Naive thymus-derived CD4-positive, alpha-beta T cell (primary cell): ENCODE measurements at regions of chr1 and their contacts with region 1.

Region 1: DNA sequence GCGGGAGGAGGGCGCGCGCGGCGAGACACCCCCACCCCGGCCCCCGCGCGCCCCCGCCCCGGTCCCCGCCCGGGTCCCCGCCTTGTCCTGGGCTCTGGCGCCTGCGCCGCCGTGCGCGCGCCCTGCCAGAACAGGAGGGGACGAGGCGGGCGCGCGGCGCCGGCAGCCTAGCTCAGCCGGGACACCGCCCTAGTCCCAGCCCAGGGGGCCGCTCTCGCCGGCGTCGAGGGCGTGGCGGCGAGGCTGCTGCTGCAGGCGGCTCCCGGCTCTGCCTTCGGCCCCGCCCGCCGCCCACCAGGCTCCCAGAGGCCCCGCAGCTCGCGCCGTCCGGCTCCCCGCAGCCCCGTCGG is at the start of gene RCAN3:
- DNase-seq: peak; percentile 82 to 94 (median 92)
- ATAC-seq: peak; percentile 81
- H3K4me3 ChIP-seq: peak within 1 kb of the TSS; percentile 84
- H3K4me3 Mint-ChIP-seq: peak within 1 kb of the TSS; percentile 90 to 100 (median 99)
- H3K27ac ChIP-seq: peak within 1 kb of the TSS; percentile 99
- H3K27ac Mint-ChIP-seq: peak within 1 kb of the TSS; percentile 95 to 99 (median 98)
- H3K4me1 ChIP-seq: peaks cover 42 to 53% of the 10 kb centered on the region in 2 donors
- H3K4me1 Mint-ChIP-seq: peaks cover 38 to 65% (median 60%) of the 10 kb centered on the region in 7 donors
- H3K27me3 ChIP-seq: no peaks in the 10 kb centered on the region
- H3K27me3 Mint-ChIP-seq: peaks cover 0 to 9% (median 0%) of the 10 kb centered on the region in 5 donors
- total RNA-seq, gene RCAN3: 68.5 to 247 (median 183) TPM

Region 2: DNA sequence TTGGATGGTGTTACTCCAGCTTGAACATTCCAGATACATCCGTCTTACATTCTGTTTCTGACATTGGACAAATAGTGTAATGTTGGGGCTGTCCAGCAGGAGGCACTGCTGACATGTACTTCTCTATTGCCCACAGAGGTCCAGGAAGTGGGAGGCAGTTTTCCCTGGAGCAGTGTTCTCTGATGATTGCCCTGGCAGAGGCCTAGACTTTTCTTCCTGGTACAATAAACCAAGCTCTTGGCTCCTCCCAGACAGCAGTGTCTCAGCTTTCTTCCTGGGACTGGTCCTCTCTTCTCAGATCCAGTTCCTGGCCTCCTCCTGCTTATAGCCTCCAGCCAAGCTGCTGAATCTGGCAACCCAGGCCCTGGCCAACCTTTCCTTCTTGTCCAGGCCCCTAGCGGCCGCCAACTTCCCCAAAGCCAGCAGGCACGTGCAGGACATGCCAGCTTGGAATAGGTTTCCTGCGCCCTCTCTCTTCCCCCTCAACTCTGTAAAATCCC is 300.7 kb before region 1 on chr1:
- CTCF ChIA-PET with region 1: no interaction called
- POLR2A ChIA-PET with region 1: no interaction called
- intact Hi-C with region 1: loop called in 1 of 2 experiments (anchors 10 kb)
- DNase-seq: peak in 7 of 9 donors; percentile 29 to 54 (median 42)
- ATAC-seq: peak; percentile 53
- H3K4me3 ChIP-seq: no peak overlapping the region
- H3K4me3 Mint-ChIP-seq: no peak overlapping the region
- H3K27ac ChIP-seq: no peak overlapping the region
- H3K27ac Mint-ChIP-seq: no peak overlapping the region
- H3K4me1 ChIP-seq: peaks cover 0 to 4% of the 10 kb centered on the region in 2 donors
- H3K4me1 Mint-ChIP-seq: peaks cover 0 to 16% (median 5%) of the 10 kb centered on the region in 7 donors
- H3K27me3 ChIP-seq: no peaks in the 10 kb centered on the region
- H3K27me3 Mint-ChIP-seq: peaks cover 0 to 5% (median 0%) of the 10 kb centered on the region in 5 donors

Region 3: GRCh38 chr1:24481101-24481500 is 21.6 kb before region 1 on chr1:
- CTCF ChIA-PET with region 1: interaction called, 44 read pairs
- POLR2A ChIA-PET with region 1: interaction called, 929 read pairs
- intact Hi-C with region 1: loop called (anchors 1 kb)
- DNase-seq: peak in 8 of 9 donors; percentile 50 to 80 (median 75)
- ATAC-seq: peak; percentile 84
- H3K4me3 ChIP-seq: peak overlapping the region; percentile 44
- H3K4me3 Mint-ChIP-seq: peak overlapping the region; percentile 74 to 95 (median 83)
- H3K27ac ChIP-seq: peak overlapping the region; percentile 83
- H3K27ac Mint-ChIP-seq: peak overlapping the region; percentile 93 to 99 (median 98)
- H3K4me1 ChIP-seq: peaks cover 49 to 59% of the 10 kb centered on the region in 2 donors
- H3K4me1 Mint-ChIP-seq: peaks cover 36 to 86% (median 77%) of the 10 kb centered on the region in 7 donors
- H3K27me3 ChIP-seq: no peaks in the 10 kb centered on the region
- H3K27me3 Mint-ChIP-seq: no peaks in the 10 kb centered on the region

Region 4: DNA sequence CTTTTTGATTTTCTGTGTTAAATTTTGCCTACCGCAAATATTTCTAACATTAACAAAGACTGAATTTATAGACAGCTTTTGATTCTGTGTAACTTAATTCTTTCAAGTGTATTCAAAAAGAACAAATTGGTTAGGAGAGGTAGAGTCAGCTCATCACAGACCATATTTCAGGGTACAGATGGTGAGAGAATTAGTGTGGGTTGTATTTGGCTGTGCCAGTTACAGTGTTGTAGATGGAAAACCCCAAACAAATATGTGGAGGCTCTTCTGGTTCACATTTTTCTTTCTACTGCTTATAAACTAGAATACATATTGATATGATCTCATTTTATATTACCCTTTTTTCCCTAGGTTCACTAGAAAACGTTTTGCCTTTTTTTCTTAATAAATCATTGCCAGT is 11.0 kb after region 1 on chr1:
- CTCF ChIA-PET with region 1: interaction called, 7 read pairs
- POLR2A ChIA-PET with region 1: interaction called, 64 read pairs
- intact Hi-C with region 1: no loop called
- DNase-seq: no peak
- ATAC-seq: no peak
- H3K4me3 ChIP-seq: no peak overlapping the region
- H3K4me3 Mint-ChIP-seq: peak overlapping the region in 8 of 10 donors; percentile 48 to 84 (median 74)
- H3K27ac ChIP-seq: peak overlapping the region; percentile 62
- H3K27ac Mint-ChIP-seq: peak overlapping the region in 7 of 9 donors; percentile 76 to 93 (median 86)
- H3K4me1 ChIP-seq: peaks cover 34 to 79% of the 10 kb centered on the region in 2 donors
- H3K4me1 Mint-ChIP-seq: peaks cover 48 to 95% (median 81%) of the 10 kb centered on the region in 7 donors
- H3K27me3 ChIP-seq: no peaks in the 10 kb centered on the region
- H3K27me3 Mint-ChIP-seq: no peaks in the 10 kb centered on the region

Region 5: DNA sequence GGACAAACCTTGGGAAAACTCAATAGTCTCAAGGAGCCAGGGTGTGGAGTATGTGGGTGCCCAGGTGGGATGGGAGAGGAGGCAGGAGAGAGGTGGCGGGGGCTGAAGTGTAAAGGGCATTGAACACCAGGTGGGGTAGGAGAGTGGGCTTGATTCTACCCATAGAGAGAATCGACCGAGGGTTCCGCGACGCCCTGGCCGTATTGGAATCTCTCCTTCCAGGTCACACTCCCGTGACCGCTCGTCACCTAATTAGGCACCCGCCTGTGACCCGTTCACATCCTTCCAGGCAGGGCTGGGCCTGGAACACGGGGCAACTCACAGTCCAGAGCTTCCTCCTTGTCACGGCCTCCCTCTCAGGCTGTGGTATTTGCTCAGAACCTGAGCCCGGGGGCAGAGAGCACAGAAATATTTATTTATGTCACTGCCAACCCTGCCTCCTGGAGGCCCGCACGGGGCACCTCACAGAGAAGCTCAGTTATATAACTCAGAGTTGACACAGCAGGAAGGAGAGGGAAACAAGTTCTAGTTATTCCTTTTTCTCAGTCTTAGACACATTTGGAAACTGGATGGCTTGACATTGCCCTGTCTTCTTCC is 65.2 kb after region 1 on chr1:
- CTCF ChIA-PET with region 1: no interaction called
- POLR2A ChIA-PET with region 1: no interaction called
- intact Hi-C with region 1: no loop called
- DNase-seq: peak in 4 of 9 donors; percentile 15 to 40 (median 29)
- ATAC-seq: peak; percentile 59
- H3K4me3 ChIP-seq: no peak overlapping the region
- H3K4me3 Mint-ChIP-seq: no peak overlapping the region
- H3K27ac ChIP-seq: no peak overlapping the region
- H3K27ac Mint-ChIP-seq: peak overlapping the region in 4 of 9 donors; percentile 18 to 74 (median 60)
- H3K4me1 ChIP-seq: no peaks in the 10 kb centered on the region
- H3K4me1 Mint-ChIP-seq: peaks cover 3 to 14% (median 8%) of the 10 kb centered on the region in 7 donors
- H3K27me3 ChIP-seq: no peaks in the 10 kb centered on the region
- H3K27me3 Mint-ChIP-seq: peaks cover 0 to 12% (median 0%) of the 10 kb centered on the region in 5 donors

Region 6: GRCh38 chr1:24586970-24587820 is 84.5 kb after region 1 on chr1:
- CTCF ChIA-PET with region 1: no interaction called
- POLR2A ChIA-PET with region 1: interaction called, 5 read pairs
- intact Hi-C with region 1: loop called in 1 of 2 experiments (anchors 1 kb)
- DNase-seq: peak in 8 of 9 donors; percentile 32 to 83 (median 76)
- ATAC-seq: peak; percentile 98
- H3K4me3 ChIP-seq: no peak overlapping the region
- H3K4me3 Mint-ChIP-seq: peak overlapping the region in 4 of 10 donors; percentile 12 to 38 (median 35)
- H3K27ac ChIP-seq: peak overlapping the region; percentile 35
- H3K27ac Mint-ChIP-seq: peak overlapping the region in 8 of 9 donors; percentile 78 to 93 (median 85)
- H3K4me1 ChIP-seq: peaks cover 0 to 7% of the 10 kb centered on the region in 2 donors
- H3K4me1 Mint-ChIP-seq: peaks cover 0 to 9% (median 7%) of the 10 kb centered on the region in 7 donors
- H3K27me3 ChIP-seq: no peaks in the 10 kb centered on the region
- H3K27me3 Mint-ChIP-seq: peaks cover 0 to 14% (median 0%) of the 10 kb centered on the region in 5 donors

Region 7: DNA sequence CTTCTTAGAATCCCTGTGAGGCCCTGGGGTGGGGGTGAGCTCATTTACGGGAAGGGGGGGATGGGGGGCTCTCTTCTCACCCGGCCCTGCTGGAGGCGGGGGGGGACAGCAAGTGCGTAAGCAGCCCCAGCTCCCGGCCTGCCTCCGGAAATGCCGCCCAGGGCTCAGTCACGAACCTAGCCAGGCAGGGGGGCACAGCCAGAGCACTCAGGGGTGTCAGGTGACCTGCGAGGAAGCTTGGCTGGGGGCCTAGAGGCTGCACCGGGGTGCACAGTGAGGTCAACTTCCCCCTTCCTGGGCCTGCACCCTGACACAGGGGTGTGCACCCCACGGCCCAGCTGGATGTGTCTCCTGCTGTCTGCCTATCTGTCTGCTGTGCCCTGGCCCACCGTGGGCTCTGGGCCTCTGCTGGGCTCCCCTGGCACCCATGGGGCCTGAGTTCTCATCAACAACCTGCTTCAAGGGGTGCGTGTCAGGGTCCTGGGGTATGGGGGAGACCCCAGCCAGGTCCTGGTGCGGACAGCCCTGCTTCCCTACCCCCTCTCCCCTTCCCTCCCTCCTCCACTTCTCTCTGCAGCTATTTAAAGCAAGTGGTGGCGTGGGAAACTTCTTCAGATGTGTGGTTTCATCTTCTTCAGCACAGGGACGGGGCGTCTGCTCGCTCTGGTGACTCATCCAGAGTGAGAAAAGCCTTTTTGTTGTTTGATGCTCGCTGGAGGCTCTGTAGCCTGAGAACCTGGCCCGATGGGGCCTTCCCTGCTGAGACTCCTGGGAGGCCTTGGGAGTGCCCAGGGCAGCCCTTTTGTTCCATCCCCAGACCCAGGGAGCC is 519.9 kb after region 1 on chr1:
- CTCF ChIA-PET with region 1: no interaction called
- POLR2A ChIA-PET with region 1: no interaction called
- intact Hi-C with region 1: loop called in 1 of 2 experiments (anchors 10 kb)
- DNase-seq: peak; percentile 80 to 97 (median 91)
- ATAC-seq: peak; percentile 92
- H3K4me3 ChIP-seq: peak overlapping the region; percentile 49
- H3K4me3 Mint-ChIP-seq: peak overlapping the region; percentile 10 to 83 (median 76)
- H3K27ac ChIP-seq: peak overlapping the region; percentile 89
- H3K27ac Mint-ChIP-seq: peak overlapping the region; percentile 91 to 98 (median 96)
- H3K4me1 ChIP-seq: peaks cover 57 to 58% of the 10 kb centered on the region in 2 donors
- H3K4me1 Mint-ChIP-seq: peaks cover 45 to 89% (median 67%) of the 10 kb centered on the region in 7 donors
- H3K27me3 ChIP-seq: no peaks in the 10 kb centered on the region
- H3K27me3 Mint-ChIP-seq: no peaks in the 10 kb centered on the region